ENCODE measurements at regions of chr6 and their contacts with region 1.

Region 1: GRCh38 chr6:39228992-39229767 is at the start of gene KCNK5:
- DNase-seq: peak; percentile 97
- H3K4me3 Mint-ChIP-seq: peak within 1 kb of the TSS; percentile 94
- H3K27ac Mint-ChIP-seq: peak within 1 kb of the TSS; percentile 86
- H3K4me1 Mint-ChIP-seq: peaks cover 42% of the 10 kb centered on the region
- H3K27me3 Mint-ChIP-seq: no peaks in the 10 kb centered on the region
- total RNA-seq, gene KCNK5: 33.8 and 35.3 TPM in 2 replicates

Region 2: GRCh38 chr6:38871741-38872568 is 357.2 kb before region 1 on chr6:
- intact Hi-C with region 1: loop called (anchors 5 kb)
- DNase-seq: peak; percentile 90
- H3K4me3 Mint-ChIP-seq: no peak overlapping the region
- H3K27ac Mint-ChIP-seq: no peak overlapping the region
- H3K4me1 Mint-ChIP-seq: peaks cover 16% of the 10 kb centered on the region
- H3K27me3 Mint-ChIP-seq: peaks cover 6% of the 10 kb centered on the region

Region 3: DNA sequence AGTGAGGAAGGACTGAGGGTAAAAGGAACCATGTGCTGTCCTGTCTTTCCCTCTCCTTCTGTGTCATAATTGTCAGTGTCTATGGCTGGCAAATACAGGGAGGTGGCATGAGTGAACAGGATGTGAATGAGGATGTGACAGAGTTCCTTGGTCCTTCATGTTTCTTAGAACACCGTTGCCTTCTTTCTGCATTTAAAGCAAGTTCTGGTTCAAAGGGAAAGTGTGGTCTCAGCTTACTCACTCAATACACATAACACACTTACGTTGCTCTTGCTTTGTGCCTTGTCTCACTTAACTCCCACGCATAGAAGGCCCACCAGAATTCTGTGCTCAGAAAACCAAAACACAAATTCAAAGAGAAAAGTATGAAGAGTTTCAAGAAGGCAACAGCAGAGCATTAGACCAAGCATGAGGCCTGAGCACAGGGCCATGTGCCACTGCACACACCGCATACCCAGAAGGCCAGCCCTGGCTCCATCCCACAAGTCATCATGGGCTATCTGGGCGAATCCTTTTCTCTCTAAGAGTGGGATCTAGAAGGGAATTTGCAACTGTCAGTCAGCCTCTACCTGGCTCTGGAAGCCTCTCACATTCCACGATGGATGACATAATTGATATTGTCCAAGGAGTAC is 75.3 kb before region 1 on chr6:
- intact Hi-C with region 1: loop called (anchors 2 kb)
- DNase-seq: peak; percentile 71
- H3K4me3 Mint-ChIP-seq: no peak overlapping the region
- H3K27ac Mint-ChIP-seq: peak overlapping the region; percentile 83
- H3K4me1 Mint-ChIP-seq: peaks cover 22% of the 10 kb centered on the region
- H3K27me3 Mint-ChIP-seq: peaks cover 4% of the 10 kb centered on the region

Region 4: GRCh38 chr6:39254999-39255535 is 25.9 kb after region 1 on chr6:
- intact Hi-C with region 1: loop called (anchors 1 kb)
- DNase-seq: no peak
- H3K4me3 Mint-ChIP-seq: no peak overlapping the region
- H3K27ac Mint-ChIP-seq: peak overlapping the region; percentile 22
- H3K4me1 Mint-ChIP-seq: peaks cover 10% of the 10 kb centered on the region
- H3K27me3 Mint-ChIP-seq: peaks cover 27% of the 10 kb centered on the region

Region 5: DNA sequence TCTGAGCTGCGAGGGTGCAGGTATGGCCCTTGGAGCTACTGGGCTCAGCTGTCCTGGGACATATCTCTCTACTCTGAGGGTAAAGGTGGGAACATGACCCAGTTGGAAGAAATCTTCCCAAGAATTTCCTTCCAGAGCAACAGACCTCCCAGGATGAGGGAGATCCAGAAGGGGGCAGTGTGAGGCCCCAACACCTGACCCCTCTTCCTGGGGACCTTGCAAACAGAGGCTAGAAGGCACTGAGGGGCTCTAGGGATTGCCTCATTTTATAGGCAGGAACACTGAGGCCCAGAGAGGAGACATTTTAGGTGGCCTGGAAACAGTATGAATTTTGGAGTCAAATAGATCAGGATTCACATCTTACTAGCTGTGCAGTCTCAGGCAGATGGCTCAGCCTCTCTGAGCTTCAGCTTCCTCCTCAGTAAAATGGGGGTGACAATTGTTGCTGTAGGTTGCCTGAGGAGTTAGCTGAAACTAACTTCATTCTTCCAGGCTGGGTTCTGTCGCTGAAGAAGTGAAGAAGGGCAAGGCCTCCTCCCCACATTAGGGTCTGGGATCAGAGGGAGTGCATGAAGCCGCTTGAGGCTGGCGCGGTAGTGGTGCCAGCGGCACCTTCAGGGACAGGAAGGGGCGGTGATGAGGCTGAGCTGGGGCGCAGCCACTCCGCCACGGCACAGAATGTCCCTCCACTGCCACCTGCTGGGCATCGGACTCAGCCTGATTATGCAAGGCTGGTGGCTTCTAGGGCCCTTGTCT is 73.7 kb after region 1 on chr6:
- intact Hi-C with region 1: loop called (anchors 1 kb)
- DNase-seq: peak; percentile 96
- H3K4me3 Mint-ChIP-seq: peak overlapping the region; percentile 74
- H3K27ac Mint-ChIP-seq: no peak overlapping the region
- H3K4me1 Mint-ChIP-seq: peaks cover 8% of the 10 kb centered on the region
- H3K27me3 Mint-ChIP-seq: peaks cover 2% of the 10 kb centered on the region